Right ventricle myocardium superior (tissue), 1 donor: ENCODE measurements at regions of chr11 and their contacts with region 1.

Region 1: DNA sequence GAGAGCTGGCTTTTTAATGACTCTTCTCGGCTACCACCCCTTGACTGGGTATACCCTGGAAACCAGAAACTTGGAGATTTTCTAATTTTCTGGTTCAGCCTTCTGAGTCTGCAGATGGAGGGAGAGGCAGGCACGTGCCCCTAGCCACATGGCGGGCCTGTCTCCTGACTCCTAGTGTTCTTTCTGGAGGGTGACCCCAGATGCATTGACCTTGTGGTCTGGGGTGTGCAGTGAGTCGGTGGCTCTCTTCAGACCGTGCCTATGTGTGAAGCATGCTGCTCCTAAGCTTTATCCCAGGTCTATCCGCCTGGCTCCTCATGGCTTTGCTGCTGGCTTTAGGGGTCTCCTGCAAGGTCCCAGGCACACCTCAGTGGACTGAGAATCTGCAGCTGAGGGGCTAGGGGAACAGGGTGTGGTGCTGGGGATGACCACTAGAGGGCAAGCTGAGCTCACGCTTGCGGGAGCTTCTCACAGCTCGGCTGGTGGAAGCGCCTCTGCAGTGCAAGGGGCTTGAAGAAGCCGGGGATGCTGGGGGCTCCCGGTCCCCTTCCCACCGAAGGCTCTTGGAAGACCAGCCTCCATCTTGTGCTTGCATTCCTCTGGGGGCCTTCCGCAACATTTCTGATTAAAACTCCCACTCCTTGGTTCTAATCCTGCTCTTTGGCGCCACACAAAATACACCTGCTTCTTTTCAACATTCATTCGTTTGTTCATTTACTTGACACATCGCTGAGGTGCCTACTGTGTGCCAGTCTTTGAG is 51.8 kb downstream of the OTOG start:
- DNase-seq: peak; percentile 70
- ATAC-seq: peak; percentile 91

Region 2: GRCh38 chr11:17719938-17720795 is 121.3 kb after region 1 on chr11:
- intact Hi-C with region 1: loop called (anchors 5 kb)
- DNase-seq: no peak
- ATAC-seq: peak; percentile 71

Region 3: GRCh38 chr11:18408558-18409242 is 809.8 kb after region 1 on chr11:
- intact Hi-C with region 1: no loop called
- DNase-seq: no peak
- ATAC-seq: no peak